Mammary epithelial cell (primary cell): ENCODE measurements at regions of chr1 and their contacts with region 1.

Region 1: GRCh38 chr1:94237291-94238226 is at the start of gene ARHGAP29:
- DNase-seq: peak; percentile 83
- H3K4me3 ChIP-seq: peak within 1 kb of the TSS; percentile 80 to 99 (median 96)
- H3K27ac ChIP-seq: peak within 1 kb of the TSS; percentile 82
- H3K4me1 ChIP-seq: peaks cover 34% of the 10 kb centered on the region
- H3K27me3 ChIP-seq: no peaks in the 10 kb centered on the region
- CTCF ChIP-seq: no peak
- total RNA-seq, gene ARHGAP29: 54.7 to 100 TPM

Region 2: GRCh38 chr1:94045465-94046056 is 192.0 kb before region 1 on chr1:
- CTCF ChIA-PET with region 1: interaction called, 6 read pairs
- dilution Hi-C with region 1: no loop called
- in situ Hi-C with region 1: loop called in 1 of 2 experiments (anchors 25 kb)
- intact Hi-C with region 1: loop called (anchors 5 kb)
- DNase-seq: peak; percentile 91
- H3K4me3 ChIP-seq: no peak overlapping the region
- H3K27ac ChIP-seq: no peak overlapping the region
- H3K4me1 ChIP-seq: peaks cover 16% of the 10 kb centered on the region
- H3K27me3 ChIP-seq: no peaks in the 10 kb centered on the region
- CTCF ChIP-seq: peak; percentile 81

Region 3: DNA sequence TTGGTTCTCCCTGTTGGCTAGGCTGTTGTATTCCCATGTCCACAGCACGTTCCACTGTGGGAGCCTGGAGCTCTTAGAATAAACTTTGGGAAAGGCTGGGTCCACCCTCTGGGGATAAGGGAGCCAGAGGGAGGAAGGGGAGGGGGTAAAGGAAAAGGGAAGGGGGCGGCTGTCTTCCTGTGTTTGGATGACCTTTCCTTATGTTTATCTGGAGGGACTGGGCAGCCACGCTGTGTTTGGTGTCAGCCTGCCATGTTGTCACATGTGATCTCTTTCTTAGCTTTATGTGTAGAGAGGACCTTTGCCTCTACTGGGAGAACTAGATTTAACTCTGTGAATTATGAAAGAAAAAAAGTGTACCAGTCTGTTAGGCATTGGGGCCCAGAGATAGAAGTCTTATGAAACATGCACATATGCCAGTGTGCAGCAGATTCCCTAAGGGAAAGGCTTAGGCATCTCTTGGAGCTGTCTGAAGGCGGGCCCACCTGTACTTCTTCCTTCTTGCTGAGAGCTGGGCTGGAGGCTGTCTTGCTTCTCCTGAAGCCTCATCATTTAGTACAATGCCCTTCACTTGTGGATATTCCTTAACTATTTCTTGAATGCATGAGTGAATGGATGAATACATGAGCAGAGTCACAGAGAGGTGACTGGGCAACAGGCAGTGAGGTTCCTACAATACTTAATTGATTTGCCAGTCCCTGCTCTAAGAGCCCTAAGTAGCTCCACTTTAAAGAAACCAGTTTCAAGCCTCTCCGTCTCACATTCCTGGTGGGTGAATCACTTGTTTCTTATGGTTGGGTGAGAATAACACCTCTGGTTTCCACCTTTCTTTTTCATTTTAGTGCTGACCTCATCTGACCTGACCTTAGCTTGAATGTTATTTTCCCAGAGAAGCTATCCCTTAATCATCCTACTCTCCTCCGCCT is 62.3 kb after region 1 on chr1:
- CTCF ChIA-PET with region 1: no interaction called
- dilution Hi-C with region 1: no loop called
- in situ Hi-C with region 1: no loop called
- intact Hi-C with region 1: loop called (anchors 2 kb)
- DNase-seq: peak; percentile 96
- H3K4me3 ChIP-seq: no peak overlapping the region
- H3K27ac ChIP-seq: peak overlapping the region; percentile 70
- H3K4me1 ChIP-seq: peaks cover 44% of the 10 kb centered on the region
- H3K27me3 ChIP-seq: no peaks in the 10 kb centered on the region
- CTCF ChIP-seq: no peak

Region 4: DNA sequence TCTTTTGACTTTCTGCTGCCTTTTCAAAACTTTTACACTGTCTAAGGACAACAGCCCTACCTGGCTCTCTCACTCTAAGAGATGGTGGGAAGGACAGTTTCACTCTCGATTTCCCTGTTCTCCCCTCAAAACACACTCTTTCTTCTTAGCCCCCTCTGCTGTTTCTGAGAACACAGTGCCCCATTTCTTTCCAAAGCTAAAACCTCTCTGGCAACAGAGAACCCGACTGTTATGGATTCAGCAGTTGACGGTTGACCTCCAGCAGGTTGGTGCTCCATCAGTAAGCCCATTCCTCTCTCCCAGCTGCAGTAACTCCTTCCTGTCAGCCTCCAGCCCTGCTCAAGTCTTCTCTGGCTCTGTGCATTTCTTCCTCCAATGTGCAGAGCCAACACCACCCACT is 92.4 kb after region 1 on chr1:
- CTCF ChIA-PET with region 1: interaction called, 28 read pairs
- dilution Hi-C with region 1: no loop called
- in situ Hi-C with region 1: no loop called
- intact Hi-C with region 1: loop called (anchors 1 kb)
- DNase-seq: no peak
- H3K4me3 ChIP-seq: no peak overlapping the region
- H3K27ac ChIP-seq: no peak overlapping the region
- H3K4me1 ChIP-seq: peaks cover 45% of the 10 kb centered on the region
- H3K27me3 ChIP-seq: no peaks in the 10 kb centered on the region
- CTCF ChIP-seq: peak; percentile 28 to 44